CD8-positive, alpha-beta T cell (primary cell): ENCODE measurements at regions of chr12 and their contacts with region 1.

Region 1: GRCh38 chr12:4276524-4277204 is 3.1 kb downstream of the CCND2 start:
- DNase-seq: peak; percentile 67 to 94 (median 88)
- ATAC-seq: peak; percentile 30
- H3K4me3 ChIP-seq: no peak overlapping the region
- H3K4me3 Mint-ChIP-seq: peak overlapping the region; percentile 97
- H3K27ac ChIP-seq: peak overlapping the region in 1 of 2 experiments; percentile 94
- H3K27ac Mint-ChIP-seq: peak overlapping the region; percentile 98
- H3K4me1 ChIP-seq: peaks cover 67% of the 10 kb centered on the region
- H3K4me1 Mint-ChIP-seq: peaks cover 65% of the 10 kb centered on the region
- H3K27me3 ChIP-seq: no peaks in the 10 kb centered on the region
- H3K27me3 Mint-ChIP-seq: no peaks in the 10 kb centered on the region
- CTCF ChIP-seq: peak; percentile 83

Region 2: DNA sequence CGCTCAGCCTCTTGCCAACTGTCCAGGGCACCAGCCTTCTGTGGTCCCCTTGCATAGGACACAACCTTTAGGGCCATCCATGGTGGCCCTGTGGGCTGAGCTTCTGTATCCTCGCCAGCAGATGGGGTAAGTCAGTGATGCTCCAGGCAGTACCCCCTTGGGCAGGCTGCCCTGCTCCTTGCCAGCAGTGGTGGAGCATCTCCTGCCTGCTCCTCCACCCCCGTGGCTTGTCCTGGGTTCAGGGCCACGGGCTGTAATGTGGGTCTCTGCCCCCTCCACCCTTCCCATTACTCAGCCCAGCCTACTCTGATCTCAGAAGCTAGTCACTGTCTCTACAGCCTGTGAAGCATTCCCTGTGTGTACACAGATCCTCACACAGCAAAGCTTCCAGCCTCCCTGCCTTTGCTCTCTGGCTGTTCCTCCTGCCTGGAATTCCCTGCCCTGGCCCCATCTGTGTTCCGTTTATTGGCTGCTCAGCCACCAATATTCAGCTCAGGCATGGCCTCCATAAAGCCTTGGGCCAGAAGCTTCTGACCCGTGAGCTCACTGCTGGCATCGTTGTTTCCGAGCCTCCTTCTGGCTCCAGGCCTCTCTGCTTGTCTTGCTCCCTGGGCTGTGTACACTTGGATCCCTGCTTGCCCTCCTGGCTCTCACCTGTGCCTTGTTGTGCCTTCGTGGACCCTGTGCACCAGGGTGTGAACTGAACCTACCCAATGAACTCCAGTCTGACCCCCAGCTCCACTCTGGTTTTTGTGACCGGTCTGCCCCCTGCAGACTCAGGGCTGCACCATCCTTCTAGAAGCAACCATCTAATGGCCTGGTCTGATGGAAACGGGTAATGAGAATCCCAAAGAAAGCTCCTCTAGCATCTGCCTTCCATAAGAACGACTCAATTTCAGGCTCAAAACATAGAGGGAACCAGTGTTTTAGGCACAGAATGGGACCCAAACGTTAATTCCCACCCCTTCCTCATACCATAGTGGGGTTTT is 962.7 kb before region 1 on chr12:
- CTCF ChIA-PET with region 1: no interaction called
- POLR2A ChIA-PET with region 1: no interaction called
- intact Hi-C with region 1: no loop called
- DNase-seq: peak in 4 of 9 experiments; percentile 25 to 47 (median 32)
- ATAC-seq: no peak
- H3K4me3 ChIP-seq: no peak overlapping the region
- H3K4me3 Mint-ChIP-seq: no peak overlapping the region
- H3K27ac ChIP-seq: no peak overlapping the region
- H3K27ac Mint-ChIP-seq: no peak overlapping the region
- H3K4me1 ChIP-seq: no peaks in the 10 kb centered on the region
- H3K4me1 Mint-ChIP-seq: no peaks in the 10 kb centered on the region
- H3K27me3 ChIP-seq: no peaks in the 10 kb centered on the region
- H3K27me3 Mint-ChIP-seq: no peaks in the 10 kb centered on the region
- CTCF ChIP-seq: no peak

Region 3: DNA sequence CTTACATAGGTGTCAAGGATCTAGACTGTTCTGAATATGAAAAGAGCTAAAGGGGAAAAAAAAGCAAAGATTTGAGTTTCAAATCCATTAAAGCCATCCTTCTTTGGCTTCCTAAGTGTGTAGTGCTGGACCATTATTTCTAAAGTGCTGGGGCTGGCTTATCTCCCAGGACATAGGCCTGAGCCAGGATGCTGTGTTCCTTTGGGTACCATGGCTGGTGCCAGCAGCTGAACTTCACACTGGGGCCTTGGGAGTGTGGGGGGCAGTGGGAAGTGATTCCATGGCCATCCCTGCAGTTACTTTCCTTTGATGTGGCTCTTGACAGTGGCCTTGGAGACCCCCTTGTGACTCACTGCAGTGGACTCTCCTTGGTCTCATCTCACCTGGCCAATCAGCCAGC is 764.9 kb before region 1 on chr12:
- CTCF ChIA-PET with region 1: no interaction called
- POLR2A ChIA-PET with region 1: no interaction called
- intact Hi-C with region 1: no loop called
- DNase-seq: no peak
- ATAC-seq: no peak
- H3K4me3 ChIP-seq: no peak overlapping the region
- H3K4me3 Mint-ChIP-seq: no peak overlapping the region
- H3K27ac ChIP-seq: no peak overlapping the region
- H3K27ac Mint-ChIP-seq: no peak overlapping the region
- H3K4me1 ChIP-seq: no peaks in the 10 kb centered on the region
- H3K4me1 Mint-ChIP-seq: no peaks in the 10 kb centered on the region
- H3K27me3 ChIP-seq: peaks cover 0 to 3% of the 10 kb centered on the region in 2 experiments
- H3K27me3 Mint-ChIP-seq: peaks cover 38% of the 10 kb centered on the region
- CTCF ChIP-seq: no peak

Region 4: GRCh38 chr12:3752741-3753486 is 523.8 kb before region 1 on chr12 and contains the start of gene CRACR2A:
- CTCF ChIA-PET with region 1: interaction called, 3 read pairs
- POLR2A ChIA-PET with region 1: interaction called, 7 read pairs
- intact Hi-C with region 1: loop called (anchors 5 kb)
- DNase-seq: peak; percentile 71 to 94 (median 85)
- ATAC-seq: peak; percentile 81
- H3K4me3 ChIP-seq: peak within 1 kb of the TSS; percentile 63 to 81
- H3K4me3 Mint-ChIP-seq: peak within 1 kb of the TSS; percentile 84
- H3K27ac ChIP-seq: peak within 1 kb of the TSS; percentile 94 to 95
- H3K27ac Mint-ChIP-seq: peak within 1 kb of the TSS; percentile 95
- H3K4me1 ChIP-seq: peaks cover 45% of the 10 kb centered on the region
- H3K4me1 Mint-ChIP-seq: peaks cover 62% of the 10 kb centered on the region
- H3K27me3 ChIP-seq: no peaks in the 10 kb centered on the region
- H3K27me3 Mint-ChIP-seq: no peaks in the 10 kb centered on the region
- CTCF ChIP-seq: peak; percentile 87
- total RNA-seq, gene CRACR2A: 17.9 TPM

Region 5: GRCh38 chr12:3973978-3974644 is 302.6 kb before region 1 on chr12:
- CTCF ChIA-PET with region 1: interaction called, 10 read pairs
- POLR2A ChIA-PET with region 1: interaction called, 5 read pairs
- intact Hi-C with region 1: no loop called
- DNase-seq: peak in 1 of 9 experiments; percentile 49
- ATAC-seq: peak; percentile 22
- H3K4me3 ChIP-seq: peak overlapping the region in 1 of 2 experiments; percentile 4
- H3K4me3 Mint-ChIP-seq: peak overlapping the region; percentile 69
- H3K27ac ChIP-seq: peak overlapping the region in 1 of 2 experiments; percentile 44
- H3K27ac Mint-ChIP-seq: peak overlapping the region; percentile 81
- H3K4me1 ChIP-seq: peaks cover 66% of the 10 kb centered on the region
- H3K4me1 Mint-ChIP-seq: peaks cover 77% of the 10 kb centered on the region
- H3K27me3 ChIP-seq: no peaks in the 10 kb centered on the region
- H3K27me3 Mint-ChIP-seq: no peaks in the 10 kb centered on the region
- CTCF ChIP-seq: no peak

Region 6: DNA sequence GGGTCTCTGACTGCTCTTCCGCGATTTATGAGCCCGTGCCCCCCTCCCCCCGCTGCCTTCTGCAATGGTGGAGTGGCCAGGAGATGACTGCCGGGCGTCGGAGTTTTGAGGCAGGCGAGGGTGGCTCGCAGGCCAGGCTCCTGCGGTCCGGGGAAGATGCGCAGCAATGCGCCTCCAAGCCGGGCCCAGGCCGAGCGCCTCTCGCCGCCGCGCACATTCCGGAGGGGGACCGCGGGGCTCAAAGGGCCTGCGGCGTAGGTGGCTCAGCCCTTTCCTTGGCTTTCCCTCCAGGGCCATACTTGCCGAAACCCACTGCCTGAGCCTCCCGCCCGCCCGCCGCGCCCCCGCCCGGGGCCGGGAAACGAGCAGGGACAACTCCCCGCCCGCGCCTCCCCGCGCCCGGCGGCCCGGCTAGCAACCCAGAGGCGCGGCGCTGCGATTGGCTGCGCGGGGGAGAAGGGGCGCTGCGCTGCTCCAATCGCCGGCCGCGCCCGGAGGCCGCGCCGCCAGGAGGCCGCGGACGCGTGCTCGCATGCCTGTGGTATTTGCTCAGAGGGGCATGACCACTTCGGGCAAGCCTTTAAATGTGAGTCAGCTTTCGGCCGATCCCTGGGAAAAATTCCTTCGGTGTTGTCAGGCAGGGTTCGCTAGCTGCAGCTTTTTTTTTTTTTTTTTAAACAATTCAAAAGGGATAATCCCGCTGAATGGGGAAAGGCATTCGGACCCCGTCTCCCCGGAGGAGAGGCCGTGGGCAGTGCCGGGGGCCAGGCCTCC is 245.5 kb before region 1 on chr12:
- CTCF ChIA-PET with region 1: interaction called, 75 read pairs
- POLR2A ChIA-PET with region 1: interaction called, 5 read pairs
- intact Hi-C with region 1: loop called in 1 of 2 experiments (anchors 2 kb)
- DNase-seq: peak; percentile 48 to 88 (median 71)
- ATAC-seq: peak; percentile 91
- H3K4me3 ChIP-seq: peak overlapping the region; percentile 40 to 49
- H3K4me3 Mint-ChIP-seq: peak overlapping the region; percentile 78
- H3K27ac ChIP-seq: peak overlapping the region; percentile 37 to 40
- H3K27ac Mint-ChIP-seq: peak overlapping the region; percentile 70
- H3K4me1 ChIP-seq: peaks cover 32% of the 10 kb centered on the region
- H3K4me1 Mint-ChIP-seq: peaks cover 41% of the 10 kb centered on the region
- H3K27me3 ChIP-seq: no peaks in the 10 kb centered on the region
- H3K27me3 Mint-ChIP-seq: no peaks in the 10 kb centered on the region
- CTCF ChIP-seq: no peak

Region 7: DNA sequence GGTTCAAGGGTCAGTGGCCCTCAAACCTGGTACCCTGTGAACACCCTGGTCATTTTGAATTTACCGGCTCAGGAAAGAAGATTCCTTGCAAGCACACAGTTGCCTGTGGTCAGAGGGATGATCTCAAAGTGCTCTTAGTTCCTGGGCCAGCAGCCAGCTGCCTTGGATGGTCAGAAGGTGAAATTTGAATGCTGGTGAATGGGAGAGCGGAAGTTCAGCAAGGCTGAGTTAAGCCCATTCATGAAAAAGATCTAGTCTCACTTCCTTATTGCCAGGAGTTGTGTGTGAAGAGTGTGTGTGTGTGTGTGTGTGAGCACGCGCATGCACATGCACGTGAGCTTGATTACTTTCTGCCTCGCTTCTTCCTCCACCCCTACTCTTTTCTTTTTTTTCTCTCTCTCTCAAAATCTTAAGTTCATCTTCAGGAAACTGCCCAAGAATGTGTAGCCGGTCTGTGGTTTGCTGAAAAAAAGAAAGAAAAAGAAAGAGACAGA is 158.6 kb before region 1 on chr12:
- CTCF ChIA-PET with region 1: interaction called, 36 read pairs
- POLR2A ChIA-PET with region 1: interaction called, 4 read pairs
- intact Hi-C with region 1: no loop called
- DNase-seq: peak in 2 of 9 experiments; percentile 48 to 68
- ATAC-seq: peak; percentile 61
- H3K4me3 ChIP-seq: no peak overlapping the region
- H3K4me3 Mint-ChIP-seq: peak overlapping the region; percentile 76
- H3K27ac ChIP-seq: no peak overlapping the region
- H3K27ac Mint-ChIP-seq: peak overlapping the region; percentile 66
- H3K4me1 ChIP-seq: peaks cover 27% of the 10 kb centered on the region
- H3K4me1 Mint-ChIP-seq: peaks cover 36% of the 10 kb centered on the region
- H3K27me3 ChIP-seq: no peaks in the 10 kb centered on the region
- H3K27me3 Mint-ChIP-seq: no peaks in the 10 kb centered on the region
- CTCF ChIP-seq: no peak

Region 8: DNA sequence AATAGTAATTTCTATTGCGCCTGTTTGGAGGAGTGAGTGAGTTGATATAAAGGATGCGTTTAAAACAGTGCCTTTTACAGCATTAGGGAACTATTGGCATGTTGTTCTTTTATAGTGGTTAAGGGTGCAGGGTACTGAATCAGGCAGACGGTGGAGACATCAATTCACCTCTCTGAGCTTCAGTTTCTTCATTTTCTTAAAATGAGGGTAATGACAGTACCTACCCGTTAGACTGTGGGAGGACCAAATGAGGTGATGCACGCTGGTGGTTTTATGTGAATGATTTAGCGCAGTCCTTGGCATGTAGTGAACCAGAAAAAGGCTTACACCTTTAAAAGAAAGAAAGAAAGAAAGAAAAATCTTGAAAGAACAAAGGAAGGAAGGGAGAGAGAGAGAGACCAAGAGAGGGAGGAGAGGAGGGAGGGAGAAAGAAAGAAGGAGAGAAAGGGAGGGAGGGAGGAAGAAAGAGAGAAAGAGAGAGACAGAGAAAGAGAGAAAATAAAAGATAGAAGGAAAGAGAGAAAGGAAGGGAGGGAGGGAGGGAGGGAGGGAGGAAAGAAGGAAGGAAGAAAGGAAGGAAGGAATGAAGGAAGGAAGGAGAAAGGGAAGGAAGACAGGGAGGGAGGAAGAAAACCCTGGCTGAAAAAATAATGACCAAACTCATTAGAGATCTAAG is 25.3 kb before region 1 on chr12:
- CTCF ChIA-PET with region 1: interaction called, 65 read pairs
- POLR2A ChIA-PET with region 1: interaction called, 11 read pairs
- intact Hi-C with region 1: loop called (anchors 1 kb)
- DNase-seq: peak in 4 of 9 experiments; percentile 36 to 74 (median 61)
- ATAC-seq: peak; percentile 99
- H3K4me3 ChIP-seq: no peak overlapping the region
- H3K4me3 Mint-ChIP-seq: peak overlapping the region; percentile 27
- H3K27ac ChIP-seq: no peak overlapping the region
- H3K27ac Mint-ChIP-seq: peak overlapping the region; percentile 7
- H3K4me1 ChIP-seq: peaks cover 9% of the 10 kb centered on the region
- H3K4me1 Mint-ChIP-seq: peaks cover 9% of the 10 kb centered on the region
- H3K27me3 ChIP-seq: no peaks in the 10 kb centered on the region
- H3K27me3 Mint-ChIP-seq: no peaks in the 10 kb centered on the region
- CTCF ChIP-seq: peak; percentile 52

Region 9: DNA sequence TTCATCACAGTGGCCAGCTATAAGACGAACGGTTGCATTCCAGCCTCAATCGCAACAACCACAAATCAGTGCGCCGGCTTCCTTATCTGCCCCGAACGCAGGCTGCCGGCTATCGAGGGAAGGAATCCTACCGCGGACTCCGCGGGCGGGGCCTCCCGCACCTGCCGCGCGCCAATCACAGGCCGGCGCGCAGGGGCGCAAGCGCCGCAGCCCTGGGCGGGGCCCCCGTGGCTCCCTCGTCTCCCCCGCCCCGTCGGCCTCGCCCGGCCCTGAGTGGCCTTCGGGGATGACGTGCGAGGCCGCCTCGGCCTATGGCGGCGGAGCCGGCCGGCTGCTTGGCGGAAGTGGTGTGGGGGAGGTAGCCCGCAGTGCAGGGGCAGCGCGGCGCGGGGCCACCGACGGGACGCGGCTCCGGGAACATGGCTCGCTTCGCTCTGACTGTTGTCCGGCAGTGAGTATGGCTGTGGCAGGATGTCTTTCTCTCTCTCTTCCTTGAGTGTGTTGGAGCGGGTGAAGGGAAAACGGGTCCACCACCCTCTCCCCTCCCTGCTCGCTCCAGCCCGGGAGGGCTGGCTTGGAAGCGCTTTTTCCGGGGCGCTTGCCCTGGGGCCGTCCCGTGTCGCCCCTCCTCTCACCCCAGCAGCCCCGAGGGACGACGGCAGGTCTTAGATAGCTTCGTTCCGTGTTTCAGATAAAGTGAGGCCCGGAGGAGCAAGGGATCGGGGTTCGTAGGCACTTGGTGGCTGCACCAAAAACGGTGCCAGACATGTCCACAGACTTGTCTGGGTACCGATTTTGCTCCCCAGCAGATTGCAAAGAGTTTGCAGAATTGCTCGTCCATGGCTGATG is 44.4 kb after region 1 on chr12 and contains the start of gene TIGAR:
- CTCF ChIA-PET with region 1: interaction called, 5 read pairs
- POLR2A ChIA-PET with region 1: interaction called, 3 read pairs
- intact Hi-C with region 1: loop called in 1 of 2 experiments (anchors 2 kb)
- DNase-seq: peak; percentile 79 to 97 (median 90)
- ATAC-seq: peak; percentile 96
- H3K4me3 ChIP-seq: peak within 1 kb of the TSS; percentile 86 to 89
- H3K4me3 Mint-ChIP-seq: peak within 1 kb of the TSS; percentile 96
- H3K27ac ChIP-seq: peak within 1 kb of the TSS; percentile 81 to 83
- H3K27ac Mint-ChIP-seq: peak within 1 kb of the TSS; percentile 95
- H3K4me1 ChIP-seq: peaks cover 25% of the 10 kb centered on the region
- H3K4me1 Mint-ChIP-seq: peaks cover 40% of the 10 kb centered on the region
- H3K27me3 ChIP-seq: no peaks in the 10 kb centered on the region
- H3K27me3 Mint-ChIP-seq: no peaks in the 10 kb centered on the region
- CTCF ChIP-seq: no peak
- total RNA-seq, gene TIGAR: 14.0 to 15.8 TPM

Region 10: GRCh38 chr12:4346931-4347330 is 70.3 kb after region 1 on chr12:
- CTCF ChIA-PET with region 1: no interaction called
- POLR2A ChIA-PET with region 1: no interaction called
- intact Hi-C with region 1: no loop called
- DNase-seq: no peak
- ATAC-seq: no peak
- H3K4me3 ChIP-seq: no peak overlapping the region
- H3K4me3 Mint-ChIP-seq: no peak overlapping the region
- H3K27ac ChIP-seq: no peak overlapping the region
- H3K27ac Mint-ChIP-seq: no peak overlapping the region
- H3K4me1 ChIP-seq: no peaks in the 10 kb centered on the region
- H3K4me1 Mint-ChIP-seq: no peaks in the 10 kb centered on the region
- H3K27me3 ChIP-seq: no peaks in the 10 kb centered on the region
- H3K27me3 Mint-ChIP-seq: no peaks in the 10 kb centered on the region
- CTCF ChIP-seq: no peak